Ovary (tissue), 10 donors: ENCODE measurements at regions of chr5 and their contacts with region 1.

Region 1: GRCh38 chr5:147453875-147454814 is 55.7 kb downstream of the DPYSL3 start:
- DNase-seq: peak; percentile 94 to 97 (median 96)
- H3K4me3 ChIP-seq: peak overlapping the region; percentile 80
- H3K27ac ChIP-seq: peak overlapping the region; percentile 80 to 92
- H3K4me1 ChIP-seq: peaks cover 17% of the 10 kb centered on the region
- H3K27me3 ChIP-seq: no peaks in the 10 kb centered on the region
- CTCF ChIP-seq: peak; percentile 86 to 89 (median 86)
- EP300 ChIP-seq: no peak
- POLR2A ChIP-seq: peak; percentile 56

Region 2: GRCh38 chr5:147223948-147224791 is 230.0 kb before region 1 on chr5:
- intact Hi-C with region 1: loop called in 1 of 4 experiments (anchors 5 kb)
- DNase-seq: peak in 3 of 5 donors; percentile 21 to 63 (median 53)
- H3K4me3 ChIP-seq: no peak overlapping the region
- H3K27ac ChIP-seq: no peak overlapping the region
- H3K4me1 ChIP-seq: no peaks in the 10 kb centered on the region
- H3K27me3 ChIP-seq: no peaks in the 10 kb centered on the region
- CTCF ChIP-seq: peak; percentile 26 to 71 (median 58)
- EP300 ChIP-seq: no peak
- POLR2A ChIP-seq: no peak

Region 3: DNA sequence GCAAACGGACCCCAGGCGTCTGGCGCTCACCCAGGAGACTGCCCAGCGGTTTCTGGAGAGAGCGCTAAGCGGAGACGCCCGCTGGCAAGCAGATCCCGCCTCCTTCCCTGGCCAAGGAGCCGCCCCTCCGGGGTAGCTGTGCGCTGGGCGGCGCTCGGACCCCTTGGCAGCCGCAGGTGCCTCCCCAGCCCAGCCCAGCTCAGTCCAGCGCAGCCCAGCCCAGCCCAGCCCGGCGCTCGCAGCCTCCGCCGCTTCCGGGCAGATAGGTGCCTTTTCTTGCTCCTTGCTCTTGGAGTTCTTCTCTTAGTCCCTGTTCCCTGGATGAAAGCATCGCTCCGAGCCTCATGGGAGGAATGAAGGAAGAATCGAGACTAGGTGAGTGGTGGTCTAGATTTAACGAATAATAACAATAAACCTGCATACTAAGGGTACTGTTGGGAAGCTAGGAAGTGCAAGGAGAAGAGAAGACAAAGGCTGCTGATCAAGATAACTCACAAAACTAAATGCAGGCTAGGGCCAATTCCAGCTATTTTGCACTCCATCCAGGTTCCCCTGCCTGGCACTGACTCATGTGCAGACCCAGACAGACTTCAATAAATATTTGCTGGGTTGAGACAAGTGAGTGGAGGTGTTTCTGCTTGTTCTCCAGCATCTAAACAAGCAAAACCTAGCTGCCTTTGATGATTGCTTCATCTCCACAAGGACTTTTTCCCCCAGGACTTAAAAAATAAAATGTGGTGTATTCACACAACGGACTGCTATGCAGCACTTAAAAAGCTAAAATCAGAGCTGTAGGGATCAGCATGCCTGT is 219.1 kb before region 1 on chr5 and contains the start of gene STK32A:
- intact Hi-C with region 1: loop called in 1 of 4 experiments (anchors 5 kb)
- DNase-seq: peak; percentile 59 to 79 (median 77)
- H3K4me3 ChIP-seq: peak within 1 kb of the TSS; percentile 72
- H3K27ac ChIP-seq: peak within 1 kb of the TSS; percentile 81 to 88
- H3K4me1 ChIP-seq: peaks cover 4% of the 10 kb centered on the region
- H3K27me3 ChIP-seq: no peaks in the 10 kb centered on the region
- CTCF ChIP-seq: no peak
- EP300 ChIP-seq: no peak
- POLR2A ChIP-seq: no peak
- total RNA-seq, gene STK32A: 1.8 to 9.0 (median 6.4) TPM

Region 4: GRCh38 chr5:147403651-147404640 is 50.2 kb before region 1 on chr5:
- intact Hi-C with region 1: loop called in 1 of 4 experiments (anchors 5 kb)
- DNase-seq: peak; percentile 55 to 80 (median 65)
- H3K4me3 ChIP-seq: no peak overlapping the region
- H3K27ac ChIP-seq: peak overlapping the region; percentile 79 to 83
- H3K4me1 ChIP-seq: peaks cover 25% of the 10 kb centered on the region
- H3K27me3 ChIP-seq: no peaks in the 10 kb centered on the region
- CTCF ChIP-seq: no peak
- EP300 ChIP-seq: no peak
- POLR2A ChIP-seq: no peak

Region 5: DNA sequence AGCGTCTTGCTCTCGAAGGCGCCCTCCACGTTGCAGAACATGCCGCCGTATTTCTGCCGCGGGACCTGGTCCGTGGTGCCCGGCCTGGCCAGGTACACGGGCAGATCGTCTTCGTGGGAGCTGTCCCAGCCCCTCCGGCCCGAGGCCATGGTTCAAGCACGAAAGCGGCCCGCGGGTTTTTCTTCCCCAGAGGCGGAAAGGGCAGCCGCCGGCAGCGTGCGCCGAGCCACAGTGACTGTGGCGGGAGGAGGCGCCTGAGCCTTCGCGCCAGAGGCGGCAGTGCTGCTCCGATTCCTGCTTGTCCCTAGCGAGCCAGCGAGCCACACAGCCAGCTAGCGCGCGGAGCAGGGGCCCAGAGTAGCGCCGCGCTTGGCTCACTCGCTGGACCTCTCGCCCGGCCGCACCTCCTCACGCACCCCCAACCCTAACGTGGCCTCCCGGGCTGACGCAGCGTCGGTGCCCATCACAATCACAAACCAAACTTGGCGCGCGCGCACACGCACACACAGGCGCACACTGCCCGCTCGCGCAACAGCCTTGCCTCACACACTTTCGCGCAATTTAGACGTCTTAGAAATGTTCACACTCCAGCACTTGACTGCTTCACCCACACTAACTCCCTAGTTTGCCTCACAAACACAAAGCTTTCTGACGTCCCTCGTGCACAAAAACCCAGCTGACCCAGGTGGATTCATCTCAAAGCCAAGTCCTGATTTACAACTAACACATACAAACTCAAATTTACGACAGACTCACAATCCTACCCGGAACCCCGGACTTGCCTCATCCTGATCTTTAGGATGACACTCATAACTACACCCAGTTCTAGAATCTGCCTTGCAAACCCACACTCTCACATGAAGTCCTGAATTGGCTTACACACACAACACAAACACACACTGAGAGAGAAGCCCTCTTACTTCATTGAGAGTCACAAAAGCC is 55.8 kb after region 1 on chr5 and contains the start of gene DPYSL3:
- intact Hi-C with region 1: loop called in 3 of 4 experiments (anchors 2 to 10 kb)
- DNase-seq: peak; percentile 77 to 87 (median 83)
- H3K4me3 ChIP-seq: peak within 1 kb of the TSS; percentile 53
- H3K27ac ChIP-seq: peak within 1 kb of the TSS; percentile 85 to 89
- H3K4me1 ChIP-seq: peaks cover 1% of the 10 kb centered on the region
- H3K27me3 ChIP-seq: no peaks in the 10 kb centered on the region
- CTCF ChIP-seq: peak; percentile 7 to 62 (median 57)
- EP300 ChIP-seq: no peak
- POLR2A ChIP-seq: peak; percentile 75
- total RNA-seq, gene DPYSL3: 77.9 to 219 (median 155) TPM

Region 6: GRCh38 chr5:147558826-147559225 is 104.7 kb after region 1 on chr5:
- intact Hi-C with region 1: loop called (anchors 5 to 10 kb)
- DNase-seq: peak; percentile 62 to 80 (median 76)
- H3K4me3 ChIP-seq: no peak overlapping the region
- H3K27ac ChIP-seq: peak overlapping the region; percentile 15 to 20
- H3K4me1 ChIP-seq: peaks cover 6% of the 10 kb centered on the region
- H3K27me3 ChIP-seq: no peaks in the 10 kb centered on the region
- CTCF ChIP-seq: peak; percentile 22 to 65 (median 64)
- EP300 ChIP-seq: no peak
- POLR2A ChIP-seq: no peak

Region 7: GRCh38 chr5:147567917-147568598 is 113.9 kb after region 1 on chr5:
- intact Hi-C with region 1: loop called in 2 of 4 experiments (anchors 5 to 10 kb)
- DNase-seq: no peak
- H3K4me3 ChIP-seq: no peak overlapping the region
- H3K27ac ChIP-seq: no peak overlapping the region
- H3K4me1 ChIP-seq: no peaks in the 10 kb centered on the region
- H3K27me3 ChIP-seq: no peaks in the 10 kb centered on the region
- CTCF ChIP-seq: no peak
- EP300 ChIP-seq: no peak
- POLR2A ChIP-seq: no peak